Ovary (tissue), 10 donors: ENCODE measurements at regions of chr1 and their contacts with region 1.

Region 1: GRCh38 chr1:58266242-58266641 is 280.3 kb downstream of the OMA1 start:
- DNase-seq: no peak
- H3K4me3 ChIP-seq: no peak overlapping the region
- H3K27ac ChIP-seq: no peak overlapping the region
- H3K4me1 ChIP-seq: no peaks in the 10 kb centered on the region
- H3K27me3 ChIP-seq: no peaks in the 10 kb centered on the region
- CTCF ChIP-seq: no peak
- EP300 ChIP-seq: no peak
- POLR2A ChIP-seq: no peak

Region 2: DNA sequence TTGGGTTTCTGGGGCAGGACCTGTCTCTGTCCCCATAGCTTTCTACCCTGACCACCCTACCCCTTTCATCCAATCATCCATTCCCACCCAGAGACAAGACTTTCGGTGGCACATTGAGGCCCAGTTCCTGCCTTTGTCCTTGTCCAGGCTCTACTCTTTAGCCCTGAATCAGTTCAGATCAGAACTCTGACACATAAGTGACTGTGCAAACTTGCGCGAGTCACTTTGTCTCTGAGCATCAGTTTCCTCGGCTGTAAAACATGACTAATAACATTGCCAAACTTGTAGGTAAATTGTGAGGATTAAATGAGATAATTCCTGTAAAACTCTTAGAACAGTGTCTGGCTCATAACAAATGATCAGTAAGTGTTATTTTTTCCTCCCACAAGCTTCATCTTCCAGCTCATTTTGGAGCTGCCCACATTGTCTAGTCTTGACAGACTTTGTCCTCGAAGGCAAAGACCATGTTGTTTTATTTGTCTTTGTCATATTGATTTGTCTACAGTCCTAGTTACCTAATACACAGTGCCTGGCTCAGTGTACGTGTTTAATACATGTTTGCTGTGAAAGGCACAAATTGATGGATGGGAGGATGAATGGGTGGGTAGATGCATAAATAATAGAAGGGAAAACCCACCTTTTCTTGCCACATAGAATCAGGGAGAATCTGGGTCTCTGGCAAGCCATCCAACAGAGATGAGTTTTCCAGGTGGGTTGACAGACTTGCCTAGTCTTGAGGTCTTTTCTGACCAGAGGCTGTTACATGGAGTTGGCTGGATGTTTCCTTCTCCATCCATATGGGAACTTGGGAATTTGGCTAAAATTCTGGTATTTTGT is 17.4 kb after region 1 on chr1:
- intact Hi-C with region 1: loop called in 1 of 4 experiments (anchors 2 kb)
- DNase-seq: no peak
- H3K4me3 ChIP-seq: no peak overlapping the region
- H3K27ac ChIP-seq: no peak overlapping the region
- H3K4me1 ChIP-seq: no peaks in the 10 kb centered on the region
- H3K27me3 ChIP-seq: no peaks in the 10 kb centered on the region
- CTCF ChIP-seq: no peak
- EP300 ChIP-seq: no peak
- POLR2A ChIP-seq: no peak

Region 3: GRCh38 chr1:58628987-58629598 is 362.9 kb after region 1 on chr1:
- intact Hi-C with region 1: no loop called
- DNase-seq: no peak
- H3K4me3 ChIP-seq: no peak overlapping the region
- H3K27ac ChIP-seq: no peak overlapping the region
- H3K4me1 ChIP-seq: no peaks in the 10 kb centered on the region
- H3K27me3 ChIP-seq: no peaks in the 10 kb centered on the region
- CTCF ChIP-seq: no peak
- EP300 ChIP-seq: no peak
- POLR2A ChIP-seq: no peak